PC-3 (cell line): ENCODE measurements at regions of chrX and their contacts with region 1.

Region 1: GRCh38 chrX:24259544-24260240 is 54.2 kb downstream of the SUPT20HL2 start:
- DNase-seq: peak; percentile 67
- ATAC-seq: peak; percentile 70
- H3K4me3 ChIP-seq: no peak overlapping the region
- H3K27ac ChIP-seq: no peak overlapping the region
- H3K4me1 ChIP-seq: peaks cover 3% of the 10 kb centered on the region
- H3K27me3 ChIP-seq: no peaks in the 10 kb centered on the region
- CTCF ChIP-seq: peak; percentile 83

Region 2: DNA sequence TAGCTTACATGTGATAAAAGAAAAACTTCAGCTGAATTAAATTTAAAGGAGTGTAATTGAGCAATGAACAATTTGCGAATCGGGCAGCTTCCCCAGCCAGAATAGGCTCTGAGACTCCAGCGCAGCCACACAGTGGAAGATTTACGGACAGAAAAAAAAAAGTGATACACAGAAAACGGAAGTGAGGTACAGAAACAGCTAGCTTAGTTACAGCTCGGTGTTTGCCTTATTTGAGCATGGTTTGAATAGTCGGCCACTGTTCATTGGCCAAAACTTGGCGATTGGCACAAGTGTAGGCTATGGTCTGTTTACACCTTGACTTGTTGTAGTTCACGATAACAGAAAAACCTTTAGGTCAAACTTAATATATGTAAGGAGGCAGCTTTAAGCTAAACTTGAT is 84.0 kb after region 1 on chrX:
- CTCF ChIA-PET with region 1: no interaction called
- POLR2A ChIA-PET with region 1: no interaction called
- intact Hi-C with region 1: loop called (anchors 10 kb)
- DNase-seq: no peak
- ATAC-seq: no peak
- H3K4me3 ChIP-seq: no peak overlapping the region
- H3K27ac ChIP-seq: no peak overlapping the region
- H3K4me1 ChIP-seq: 0 out of 2 replicates have a peak, but pooled peaks cover 7% of the 10 kb centered on the region
- H3K27me3 ChIP-seq: no peaks in the 10 kb centered on the region
- CTCF ChIP-seq: no peak

Region 3: GRCh38 chrX:24371391-24371972 is 111.8 kb after region 1 on chrX:
- CTCF ChIA-PET with region 1: no interaction called
- POLR2A ChIA-PET with region 1: no interaction called
- intact Hi-C with region 1: loop called (anchors 5 kb)
- DNase-seq: peak; percentile 59
- ATAC-seq: peak; percentile 68; the same call in 1 of the 2 replicates
- H3K4me3 ChIP-seq: no peak overlapping the region
- H3K27ac ChIP-seq: no peak overlapping the region
- H3K4me1 ChIP-seq: no peaks in the 10 kb centered on the region
- H3K27me3 ChIP-seq: no peaks in the 10 kb centered on the region
- CTCF ChIP-seq: peak; percentile 75

Region 4: GRCh38 chrX:24395775-24396174 is 136.1 kb after region 1 on chrX:
- CTCF ChIA-PET with region 1: interaction called, 3 read pairs
- POLR2A ChIA-PET with region 1: no interaction called
- intact Hi-C with region 1: loop called (anchors 2 kb)
- DNase-seq: peak; percentile 85
- ATAC-seq: peak; percentile 84
- H3K4me3 ChIP-seq: no peak overlapping the region
- H3K27ac ChIP-seq: no peak overlapping the region
- H3K4me1 ChIP-seq: no peaks in the 10 kb centered on the region
- H3K27me3 ChIP-seq: 0 out of 2 replicates have a peak, but pooled peaks cover 14% of the 10 kb centered on the region
- CTCF ChIP-seq: peak; percentile 87

Region 5: DNA sequence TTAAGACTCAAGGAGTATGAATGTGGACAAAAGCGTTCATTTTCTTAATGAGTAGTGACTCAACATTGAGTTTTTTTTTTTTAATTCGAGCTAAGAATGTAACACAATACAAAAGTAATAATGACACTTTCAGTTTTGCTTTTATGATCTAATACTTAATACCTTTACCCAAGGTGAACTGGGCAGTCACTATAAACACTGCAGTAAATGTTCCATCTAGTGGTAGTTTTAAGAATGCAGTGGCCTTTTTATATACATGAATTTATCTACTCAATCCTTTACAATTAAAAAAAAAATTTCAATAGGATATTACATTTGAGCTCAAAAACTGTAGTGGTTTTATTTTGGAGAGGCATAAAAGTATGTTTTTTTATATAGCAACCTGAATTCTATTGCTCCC is 239.3 kb after region 1 on chrX:
- CTCF ChIA-PET with region 1: interaction called, 5 read pairs
- POLR2A ChIA-PET with region 1: no interaction called
- intact Hi-C with region 1: loop called (anchors 1 kb)
- DNase-seq: peak; percentile 55
- ATAC-seq: peak; percentile 33; the same call in 1 of the 2 replicates
- H3K4me3 ChIP-seq: no peak overlapping the region
- H3K27ac ChIP-seq: no peak overlapping the region
- H3K4me1 ChIP-seq: peaks cover 13% of the 10 kb centered on the region
- H3K27me3 ChIP-seq: no peaks in the 10 kb centered on the region
- CTCF ChIP-seq: peak; percentile 71